CD8-positive, alpha-beta T cell (primary cell): ENCODE measurements at regions of chr12 and their contacts with region 1.

Region 1: DNA sequence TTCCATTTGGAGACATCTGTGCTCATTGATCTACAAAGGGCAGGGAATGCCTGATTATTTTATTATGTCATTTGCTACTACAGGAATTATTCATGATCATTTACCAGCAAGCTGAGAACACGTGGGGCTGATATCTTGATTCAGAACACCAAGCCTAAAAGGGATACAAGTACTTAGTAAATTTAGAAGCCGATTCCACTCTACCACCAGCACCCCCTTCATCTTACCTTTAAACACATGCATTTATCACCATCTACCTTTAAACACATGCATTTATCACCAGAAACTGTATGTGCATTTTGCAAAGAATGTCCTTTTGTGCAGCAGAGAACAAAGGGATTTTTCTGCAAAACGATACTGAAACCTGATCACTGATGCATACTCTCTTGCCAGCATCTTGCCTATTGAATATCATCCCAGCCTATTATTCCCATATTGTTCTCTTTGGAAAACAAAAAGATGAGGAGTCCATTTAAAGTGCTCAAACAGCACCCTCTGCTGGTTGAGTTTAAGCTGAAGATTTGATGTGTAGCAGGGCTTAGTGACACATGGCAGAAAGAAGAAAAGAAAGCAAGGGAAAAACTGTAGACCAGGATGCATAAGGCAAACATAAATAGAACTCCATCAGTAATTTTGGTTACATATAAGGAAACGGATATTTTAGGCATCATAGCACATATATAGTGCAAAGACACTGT is 132.6 kb upstream of the PLEKHG7 start:
- DNase-seq: peak in 7 of 9 experiments; percentile 25 to 83 (median 45)
- ATAC-seq: peak; percentile 93
- H3K4me3 ChIP-seq: peak overlapping the region in 1 of 2 experiments; percentile 30
- H3K4me3 Mint-ChIP-seq: no peak overlapping the region
- H3K27ac ChIP-seq: no peak overlapping the region
- H3K27ac Mint-ChIP-seq: no peak overlapping the region
- H3K4me1 ChIP-seq: peaks cover 22% of the 10 kb centered on the region
- H3K4me1 Mint-ChIP-seq: peaks cover 6% of the 10 kb centered on the region
- H3K27me3 ChIP-seq: no peaks in the 10 kb centered on the region
- H3K27me3 Mint-ChIP-seq: no peaks in the 10 kb centered on the region
- CTCF ChIP-seq: peak; percentile 98

Region 2: GRCh38 chr12:91361864-91362263 is 1208.3 kb before region 1 on chr12:
- CTCF ChIA-PET with region 1: interaction called, 7 read pairs
- POLR2A ChIA-PET with region 1: no interaction called
- intact Hi-C with region 1: loop called (anchors 1 to 5 kb)
- DNase-seq: peak in 2 of 9 experiments; percentile 50 to 61
- ATAC-seq: peak; percentile 57
- H3K4me3 ChIP-seq: no peak overlapping the region
- H3K4me3 Mint-ChIP-seq: no peak overlapping the region
- H3K27ac ChIP-seq: no peak overlapping the region
- H3K27ac Mint-ChIP-seq: no peak overlapping the region
- H3K4me1 ChIP-seq: no peaks in the 10 kb centered on the region
- H3K4me1 Mint-ChIP-seq: no peaks in the 10 kb centered on the region
- H3K27me3 ChIP-seq: no peaks in the 10 kb centered on the region
- H3K27me3 Mint-ChIP-seq: peaks cover 9% of the 10 kb centered on the region
- CTCF ChIP-seq: peak; percentile 76

Region 3: DNA sequence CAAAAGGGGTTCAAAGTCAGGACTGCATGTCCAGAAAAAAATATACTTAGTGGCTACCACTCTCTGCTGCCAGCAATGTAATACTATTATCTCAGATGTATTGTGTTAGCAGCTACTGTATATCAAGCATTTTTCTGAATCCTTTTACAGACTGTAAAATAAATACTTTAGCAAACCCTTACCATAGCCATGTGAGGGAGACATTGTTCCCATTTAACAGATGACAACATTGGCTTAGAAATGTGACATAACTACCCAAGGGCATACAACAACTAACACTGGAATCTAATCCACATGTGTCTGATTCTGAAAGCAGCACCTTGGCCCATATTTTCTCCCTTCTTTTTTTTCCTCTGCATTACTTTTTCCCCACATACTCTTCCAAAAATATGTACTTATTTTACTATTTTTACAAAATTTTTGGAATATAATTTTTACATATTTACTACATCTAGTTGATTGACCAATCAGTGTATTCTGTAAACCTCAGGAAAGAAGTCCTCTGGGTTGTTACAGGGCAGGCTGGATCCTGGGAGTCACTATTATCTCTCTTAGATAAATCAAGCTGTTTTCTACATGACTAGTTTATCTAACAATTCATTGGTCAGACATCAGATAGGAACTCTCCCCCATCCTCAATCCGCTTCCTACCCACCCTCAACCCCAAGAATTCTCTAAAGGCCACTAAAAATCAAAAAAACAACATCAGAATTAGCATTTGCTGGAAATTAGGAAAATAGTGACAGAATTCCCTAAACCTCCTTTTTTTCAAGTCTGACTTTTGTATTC is 578.6 kb before region 1 on chr12:
- CTCF ChIA-PET with region 1: interaction called, 10 read pairs
- POLR2A ChIA-PET with region 1: no interaction called
- intact Hi-C with region 1: loop called (anchors 1 kb)
- DNase-seq: peak in 2 of 9 experiments; percentile 61 to 77
- ATAC-seq: peak; percentile 71
- H3K4me3 ChIP-seq: no peak overlapping the region
- H3K4me3 Mint-ChIP-seq: no peak overlapping the region
- H3K27ac ChIP-seq: no peak overlapping the region
- H3K27ac Mint-ChIP-seq: peak overlapping the region; percentile 66
- H3K4me1 ChIP-seq: peaks cover 25% of the 10 kb centered on the region
- H3K4me1 Mint-ChIP-seq: peaks cover 65% of the 10 kb centered on the region
- H3K27me3 ChIP-seq: no peaks in the 10 kb centered on the region
- H3K27me3 Mint-ChIP-seq: no peaks in the 10 kb centered on the region
- CTCF ChIP-seq: peak; percentile 28

Region 4: GRCh38 chr12:92396647-92397252 is 173.5 kb before region 1 on chr12:
- CTCF ChIA-PET with region 1: interaction called, 12 read pairs
- POLR2A ChIA-PET with region 1: interaction called, 3 read pairs
- intact Hi-C with region 1: loop called in 1 of 2 experiments (anchors 2 kb)
- DNase-seq: no peak
- ATAC-seq: no peak
- H3K4me3 ChIP-seq: no peak overlapping the region
- H3K4me3 Mint-ChIP-seq: peak overlapping the region; percentile 4
- H3K27ac ChIP-seq: peak overlapping the region; percentile 2 to 46
- H3K27ac Mint-ChIP-seq: peak overlapping the region; percentile 95
- H3K4me1 ChIP-seq: peaks cover 88% of the 10 kb centered on the region
- H3K4me1 Mint-ChIP-seq: peaks cover 93% of the 10 kb centered on the region
- H3K27me3 ChIP-seq: no peaks in the 10 kb centered on the region
- H3K27me3 Mint-ChIP-seq: no peaks in the 10 kb centered on the region
- CTCF ChIP-seq: no peak

Region 5: GRCh38 chr12:92608151-92609091 is 38.2 kb after region 1 on chr12:
- CTCF ChIA-PET with region 1: no interaction called
- POLR2A ChIA-PET with region 1: no interaction called
- intact Hi-C with region 1: loop called in 1 of 2 experiments (anchors 1 kb)
- DNase-seq: peak in 2 of 9 experiments; percentile 55 to 69
- ATAC-seq: no peak
- H3K4me3 ChIP-seq: no peak overlapping the region
- H3K4me3 Mint-ChIP-seq: peak overlapping the region; percentile 51
- H3K27ac ChIP-seq: no peak overlapping the region
- H3K27ac Mint-ChIP-seq: peak overlapping the region; percentile 24
- H3K4me1 ChIP-seq: no peaks in the 10 kb centered on the region
- H3K4me1 Mint-ChIP-seq: peaks cover 10% of the 10 kb centered on the region
- H3K27me3 ChIP-seq: no peaks in the 10 kb centered on the region
- H3K27me3 Mint-ChIP-seq: no peaks in the 10 kb centered on the region
- CTCF ChIP-seq: no peak

Region 6: DNA sequence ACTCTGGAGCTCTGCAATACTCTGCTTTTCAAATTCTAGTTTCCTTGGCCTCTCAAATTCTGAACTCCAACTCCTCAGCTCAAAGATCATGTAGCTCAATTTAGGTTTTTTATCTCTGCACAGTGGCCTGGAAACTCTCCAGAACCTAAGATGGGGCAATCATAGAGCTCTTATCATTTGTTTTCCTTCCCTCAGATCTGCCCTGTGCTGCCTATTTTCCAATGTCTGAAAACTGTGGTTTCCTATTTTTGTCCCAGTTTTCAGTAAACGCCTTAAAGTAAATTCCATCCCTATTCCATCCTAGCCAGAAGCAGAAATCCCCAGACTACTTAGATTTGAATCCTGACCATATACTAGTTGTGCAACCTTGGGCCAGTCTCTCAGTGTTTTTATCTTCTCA is 1816.2 kb after region 1 on chr12:
- CTCF ChIA-PET with region 1: no interaction called
- POLR2A ChIA-PET with region 1: no interaction called
- intact Hi-C with region 1: no loop called
- DNase-seq: no peak
- ATAC-seq: no peak
- H3K4me3 ChIP-seq: no peak overlapping the region
- H3K4me3 Mint-ChIP-seq: no peak overlapping the region
- H3K27ac ChIP-seq: no peak overlapping the region
- H3K27ac Mint-ChIP-seq: no peak overlapping the region
- H3K4me1 ChIP-seq: no peaks in the 10 kb centered on the region
- H3K4me1 Mint-ChIP-seq: no peaks in the 10 kb centered on the region
- H3K27me3 ChIP-seq: no peaks in the 10 kb centered on the region
- H3K27me3 Mint-ChIP-seq: no peaks in the 10 kb centered on the region
- CTCF ChIP-seq: no peak